Caco-2 (cell line): ENCODE measurements at regions of chrX and their contacts with region 1.

Region 1: GRCh38 chrX:153947009-153947769 is 2.7 kb upstream of the RENBP start:
- DNase-seq: peak; percentile 83 to 86
- H3K4me3 ChIP-seq: no peak overlapping the region
- H3K4me3 Mint-ChIP-seq: no peak overlapping the region
- H3K27ac Mint-ChIP-seq: no peak overlapping the region
- H3K4me1 ChIP-seq: no peaks in the 10 kb centered on the region
- H3K4me1 Mint-ChIP-seq: no peaks in the 10 kb centered on the region
- H3K27me3 ChIP-seq: no peaks in the 10 kb centered on the region
- H3K27me3 Mint-ChIP-seq: no peaks in the 10 kb centered on the region
- CTCF ChIP-seq: peak; percentile 81 to 88

Region 2: GRCh38 chrX:153763989-153764755 is 183.0 kb before region 1 on chrX and contains the start of gene PLXNB3:
- CTCF ChIA-PET with region 1: no interaction called
- POLR2A ChIA-PET with region 1: no interaction called
- intact Hi-C with region 1: loop called (anchors 1 kb)
- DNase-seq: peak; percentile 66 to 75
- H3K4me3 ChIP-seq: no peak within 1 kb of the TSS
- H3K4me3 Mint-ChIP-seq: no peak within 1 kb of the TSS
- H3K27ac Mint-ChIP-seq: no peak within 1 kb of the TSS
- H3K4me1 ChIP-seq: no peaks in the 10 kb centered on the region
- H3K4me1 Mint-ChIP-seq: no peaks in the 10 kb centered on the region
- H3K27me3 ChIP-seq: no peaks in the 10 kb centered on the region
- H3K27me3 Mint-ChIP-seq: no peaks in the 10 kb centered on the region
- CTCF ChIP-seq: peak; percentile 58 to 75
- total RNA-seq, gene PLXNB3: 0.16 TPM in 1 of 2 replicates, not detected in the other

Region 3: DNA sequence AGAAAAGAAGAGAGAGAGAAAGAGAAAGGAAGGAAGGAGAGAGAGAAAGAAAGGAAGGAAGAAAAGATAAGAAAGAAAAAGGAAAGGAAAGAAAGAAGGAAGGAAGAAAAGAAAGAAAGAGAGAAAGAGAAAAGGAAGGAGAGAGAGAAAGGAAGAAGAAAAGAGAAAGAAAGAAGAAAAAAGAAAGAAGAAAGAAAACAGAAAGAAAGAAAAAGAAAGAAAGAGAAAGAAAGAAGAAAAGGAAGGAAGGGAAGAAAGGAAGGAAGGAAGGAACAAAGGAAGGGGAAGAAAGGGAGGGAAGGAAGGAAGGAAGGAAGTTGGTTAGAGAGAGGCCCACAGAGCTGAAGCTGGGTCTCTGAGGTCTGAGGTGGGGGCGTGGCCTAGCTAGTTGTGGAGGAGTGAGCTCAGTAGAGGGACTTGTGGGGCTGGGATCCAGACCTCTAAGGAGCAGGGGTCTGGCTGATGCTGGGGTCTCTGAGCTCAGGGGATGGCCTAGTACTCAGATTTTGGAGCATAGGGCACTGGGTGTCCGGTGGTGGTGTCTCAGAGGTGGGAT is 89.8 kb before region 1 on chrX:
- CTCF ChIA-PET with region 1: no interaction called
- POLR2A ChIA-PET with region 1: no interaction called
- intact Hi-C with region 1: no loop called
- DNase-seq: no peak
- H3K4me3 ChIP-seq: no peak overlapping the region
- H3K4me3 Mint-ChIP-seq: no peak overlapping the region
- H3K27ac Mint-ChIP-seq: no peak overlapping the region
- H3K4me1 ChIP-seq: no peaks in the 10 kb centered on the region
- H3K4me1 Mint-ChIP-seq: no peaks in the 10 kb centered on the region
- H3K27me3 ChIP-seq: no peaks in the 10 kb centered on the region
- H3K27me3 Mint-ChIP-seq: peaks cover 19% of the 10 kb centered on the region
- CTCF ChIP-seq: no peak

Region 4: GRCh38 chrX:154019633-154020528 is 72.7 kb after region 1 on chrX and contains the start of gene IRAK1:
- CTCF ChIA-PET with region 1: no interaction called
- POLR2A ChIA-PET with region 1: no interaction called
- intact Hi-C with region 1: no loop called
- DNase-seq: peak in 1 of 2 experiments; percentile 75
- H3K4me3 ChIP-seq: peak within 1 kb of the TSS; percentile 63
- H3K4me3 Mint-ChIP-seq: peak within 1 kb of the TSS; percentile 87
- H3K27ac Mint-ChIP-seq: peak within 1 kb of the TSS; percentile 90
- H3K4me1 ChIP-seq: no peaks in the 10 kb centered on the region
- H3K4me1 Mint-ChIP-seq: no peaks in the 10 kb centered on the region
- H3K27me3 ChIP-seq: no peaks in the 10 kb centered on the region
- H3K27me3 Mint-ChIP-seq: no peaks in the 10 kb centered on the region
- CTCF ChIP-seq: no peak
- total RNA-seq, gene IRAK1: 119 and 126 TPM in 2 replicates

Region 5: DNA sequence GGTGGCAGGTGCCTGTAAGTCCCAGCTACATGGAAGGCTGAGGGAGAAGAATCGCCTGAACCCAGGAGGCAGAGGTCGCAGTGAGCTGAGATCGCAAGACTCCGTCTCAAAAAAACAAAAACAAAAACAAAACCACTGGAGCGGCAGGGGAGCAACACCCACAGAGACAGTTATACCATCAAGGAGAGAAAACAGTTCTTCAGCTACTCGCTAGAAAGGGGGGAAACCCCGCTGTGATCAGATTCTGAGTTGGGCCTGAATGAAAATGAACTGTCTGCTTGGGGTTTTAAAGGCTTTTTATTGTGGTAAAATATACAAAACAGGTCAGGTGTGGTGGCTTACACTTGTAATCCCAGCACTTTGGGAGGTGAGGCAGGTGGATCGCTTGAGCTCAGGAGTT is 89.3 kb after region 1 on chrX:
- CTCF ChIA-PET with region 1: no interaction called
- POLR2A ChIA-PET with region 1: no interaction called
- intact Hi-C with region 1: no loop called
- DNase-seq: no peak
- H3K4me3 ChIP-seq: no peak overlapping the region
- H3K4me3 Mint-ChIP-seq: no peak overlapping the region
- H3K27ac Mint-ChIP-seq: peak overlapping the region; percentile 35
- H3K4me1 ChIP-seq: no peaks in the 10 kb centered on the region
- H3K4me1 Mint-ChIP-seq: peaks cover 9% of the 10 kb centered on the region
- H3K27me3 ChIP-seq: no peaks in the 10 kb centered on the region
- H3K27me3 Mint-ChIP-seq: no peaks in the 10 kb centered on the region
- CTCF ChIP-seq: no peak

Region 6: DNA sequence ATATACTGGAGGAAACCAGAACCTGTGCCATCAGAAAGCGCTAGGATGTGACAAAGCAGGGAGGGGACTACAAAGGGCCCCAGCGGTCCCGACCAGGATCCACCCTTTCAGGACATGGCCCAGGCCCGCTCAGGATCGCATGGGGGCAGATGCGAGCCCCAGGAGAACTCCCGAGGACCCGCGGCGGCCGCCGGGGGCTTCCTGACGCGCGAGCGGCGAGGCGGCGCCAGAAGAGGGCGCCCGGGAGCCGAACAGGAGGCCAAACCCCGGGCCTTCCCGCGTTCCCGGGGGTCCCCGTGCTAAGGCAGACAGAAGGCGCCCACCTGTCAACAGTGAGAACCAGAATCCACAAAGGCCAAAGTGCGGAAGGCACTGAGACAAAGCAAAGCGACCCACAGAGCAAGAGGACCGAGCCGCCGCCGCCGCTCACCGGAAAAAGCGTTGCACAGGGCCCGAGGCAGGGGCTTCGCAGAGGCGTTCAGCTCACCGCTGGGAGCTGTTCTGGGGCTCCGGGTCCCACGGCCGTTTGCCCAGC is 189.5 kb after region 1 on chrX:
- CTCF ChIA-PET with region 1: no interaction called
- POLR2A ChIA-PET with region 1: no interaction called
- intact Hi-C with region 1: no loop called
- DNase-seq: peak; percentile 69 to 82
- H3K4me3 ChIP-seq: peak overlapping the region; percentile 29
- H3K4me3 Mint-ChIP-seq: peak overlapping the region; percentile 75
- H3K27ac Mint-ChIP-seq: no peak overlapping the region
- H3K4me1 ChIP-seq: no peaks in the 10 kb centered on the region
- H3K4me1 Mint-ChIP-seq: no peaks in the 10 kb centered on the region
- H3K27me3 ChIP-seq: no peaks in the 10 kb centered on the region
- H3K27me3 Mint-ChIP-seq: no peaks in the 10 kb centered on the region
- CTCF ChIP-seq: peak; percentile 67 to 69